ENCODE measurements at regions of chr3 and their contacts with region 1.

Region 1: GRCh38 chr3:58237238-58237940 is at the start of gene ABHD6:
- DNase-seq: peak; percentile 79
- H3K4me3 Mint-ChIP-seq: peak within 1 kb of the TSS; percentile 97
- H3K27ac Mint-ChIP-seq: peak within 1 kb of the TSS; percentile 86
- H3K4me1 Mint-ChIP-seq: peaks cover 25% of the 10 kb centered on the region
- H3K27me3 Mint-ChIP-seq: peaks cover 16% of the 10 kb centered on the region
- total RNA-seq, gene ABHD6: 26.4 and 28.2 TPM in 2 replicates

Region 2: DNA sequence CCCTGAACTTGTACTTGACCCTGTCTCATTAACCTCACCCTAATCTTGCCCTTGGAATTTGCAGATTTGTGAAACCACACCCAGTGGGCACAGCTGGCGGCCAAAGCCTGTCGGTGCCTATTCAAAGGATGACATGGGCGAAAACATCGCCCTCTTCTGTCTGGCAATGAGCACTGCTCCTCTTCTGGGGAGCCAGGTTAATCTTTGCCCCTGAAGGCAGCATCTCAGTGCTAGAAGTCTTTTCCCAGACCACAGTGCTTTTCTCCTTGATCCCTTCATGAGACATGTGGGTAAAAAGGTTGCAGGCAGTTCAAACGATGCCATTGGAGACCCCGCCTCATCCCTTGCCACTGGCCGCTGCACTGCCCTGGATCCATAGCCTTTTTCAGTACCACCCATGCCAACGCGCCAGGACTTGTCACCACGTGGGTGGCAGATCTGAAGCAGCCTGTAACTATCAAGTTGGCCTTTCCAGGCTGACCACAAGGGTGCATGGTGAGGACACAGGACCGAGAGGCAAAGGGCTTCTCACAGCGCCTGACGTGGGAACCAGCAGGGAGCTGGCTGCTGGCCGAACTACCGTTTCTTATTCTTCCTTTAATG is 20.1 kb before region 1 on chr3:
- intact Hi-C with region 1: loop called (anchors 2 kb)
- DNase-seq: peak; percentile 44
- H3K4me3 Mint-ChIP-seq: no peak overlapping the region
- H3K27ac Mint-ChIP-seq: no peak overlapping the region
- H3K4me1 Mint-ChIP-seq: peaks cover 45% of the 10 kb centered on the region
- H3K27me3 Mint-ChIP-seq: no peaks in the 10 kb centered on the region

Region 3: DNA sequence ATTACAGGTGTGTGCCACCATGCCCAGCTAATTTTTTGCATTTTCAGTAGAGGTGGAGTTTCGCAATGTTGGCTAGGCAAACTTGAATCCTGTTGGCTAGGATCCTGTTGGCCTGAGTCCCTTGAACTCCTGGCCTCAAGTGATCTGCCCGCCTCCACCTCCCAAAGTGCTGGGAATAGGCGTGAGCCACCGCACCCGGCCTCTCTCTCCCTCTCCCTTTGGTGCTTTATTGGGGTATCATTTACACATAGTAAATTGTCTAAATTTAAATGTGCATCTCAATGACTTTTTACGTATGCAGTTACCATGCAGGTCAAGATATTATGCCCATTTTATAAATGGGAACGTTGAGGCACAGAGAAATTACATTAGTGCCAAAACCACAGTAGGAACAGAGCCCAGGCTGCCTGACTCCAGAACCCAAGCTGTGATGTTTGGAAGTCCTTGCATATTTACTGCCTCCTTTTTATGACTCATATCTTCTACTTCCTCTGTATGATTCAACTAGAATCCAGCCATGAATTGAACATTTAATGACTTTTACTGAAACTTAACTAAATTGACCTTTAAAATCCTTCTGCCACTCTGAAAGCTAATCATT is 34.6 kb after region 1 on chr3:
- intact Hi-C with region 1: loop called (anchors 2 kb)
- DNase-seq: no peak
- H3K4me3 Mint-ChIP-seq: no peak overlapping the region
- H3K27ac Mint-ChIP-seq: peak overlapping the region; percentile 82
- H3K4me1 Mint-ChIP-seq: peaks cover 26% of the 10 kb centered on the region
- H3K27me3 Mint-ChIP-seq: no peaks in the 10 kb centered on the region

Region 4: DNA sequence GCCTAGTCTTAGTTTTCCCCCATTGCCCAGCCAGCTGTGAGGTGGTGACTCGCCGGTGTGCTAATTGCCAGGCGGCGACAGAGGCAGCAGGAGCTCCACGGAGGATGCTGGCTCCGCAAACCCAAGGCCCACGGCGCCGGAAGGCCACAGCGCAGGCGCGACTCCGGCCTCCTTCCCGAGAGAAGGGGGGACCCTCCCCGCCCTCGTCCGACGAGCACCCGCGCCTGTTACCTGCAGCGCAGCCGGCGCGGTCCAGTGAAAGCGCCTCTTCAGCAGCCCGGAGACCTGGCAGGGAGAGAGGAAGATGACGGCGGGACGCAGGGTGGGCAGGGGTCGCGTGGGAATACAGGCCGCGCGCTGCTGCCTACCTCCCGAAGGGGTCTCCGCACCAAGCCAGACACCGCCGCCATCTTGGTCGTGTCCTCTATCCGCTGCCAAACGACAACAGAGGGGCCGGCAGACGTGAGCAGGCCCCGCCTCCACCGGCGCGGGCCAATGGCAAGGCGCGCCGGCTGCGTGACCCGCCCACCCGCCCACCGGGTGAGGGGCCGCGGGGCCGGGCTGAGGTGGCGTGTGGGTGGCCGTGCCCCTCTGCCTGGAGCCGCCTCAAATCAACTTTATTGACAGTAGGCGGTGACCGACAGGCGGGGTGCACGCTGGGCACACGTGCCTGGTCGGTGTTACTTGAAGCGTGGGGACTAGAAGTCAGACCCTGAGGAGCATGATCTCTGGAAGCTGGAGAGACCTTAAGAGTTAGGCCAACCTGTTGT is 196.2 kb after region 1 on chr3 and contains the start of gene PDHB:
- intact Hi-C with region 1: loop called (anchors 10 kb)
- DNase-seq: peak; percentile 87
- H3K4me3 Mint-ChIP-seq: peak within 1 kb of the TSS; percentile 90
- H3K27ac Mint-ChIP-seq: peak within 1 kb of the TSS; percentile 90
- H3K4me1 Mint-ChIP-seq: peaks cover 36% of the 10 kb centered on the region
- H3K27me3 Mint-ChIP-seq: peaks cover 5% of the 10 kb centered on the region
- total RNA-seq, gene PDHB: 79.3 and 82.7 TPM in 2 replicates